K562 (cell line): ENCODE measurements at regions of chr2 and their contacts with region 1.

Region 1: GRCh38 chr2:56183643-56184499 is at the start of gene CCDC85A:
- DNase-seq: peak; percentile 85 to 90 (median 88)
- ATAC-seq: peak; percentile 99
- H3K4me3 ChIP-seq: peak within 1 kb of the TSS; percentile 41
- H3K27ac ChIP-seq: no peak within 1 kb of the TSS
- H3K4me1 ChIP-seq: peaks cover 0 to 14% of the 10 kb centered on the region in 2 experiments; a peak in 3 of 5 replicates
- H3K27me3 ChIP-seq: peaks cover 11 to 20% of the 10 kb centered on the region in 2 experiments; a peak in 3 of 5 replicates
- CTCF ChIP-seq: peak; percentile 79 to 83 (median 79)
- EP300 ChIP-seq: no peak
- POLR2A ChIP-seq: no peak
- RAD21 ChIP-seq: peak; percentile 67 to 79
- polyA plus RNA-seq, gene CCDC85A: not detected

Region 2: DNA sequence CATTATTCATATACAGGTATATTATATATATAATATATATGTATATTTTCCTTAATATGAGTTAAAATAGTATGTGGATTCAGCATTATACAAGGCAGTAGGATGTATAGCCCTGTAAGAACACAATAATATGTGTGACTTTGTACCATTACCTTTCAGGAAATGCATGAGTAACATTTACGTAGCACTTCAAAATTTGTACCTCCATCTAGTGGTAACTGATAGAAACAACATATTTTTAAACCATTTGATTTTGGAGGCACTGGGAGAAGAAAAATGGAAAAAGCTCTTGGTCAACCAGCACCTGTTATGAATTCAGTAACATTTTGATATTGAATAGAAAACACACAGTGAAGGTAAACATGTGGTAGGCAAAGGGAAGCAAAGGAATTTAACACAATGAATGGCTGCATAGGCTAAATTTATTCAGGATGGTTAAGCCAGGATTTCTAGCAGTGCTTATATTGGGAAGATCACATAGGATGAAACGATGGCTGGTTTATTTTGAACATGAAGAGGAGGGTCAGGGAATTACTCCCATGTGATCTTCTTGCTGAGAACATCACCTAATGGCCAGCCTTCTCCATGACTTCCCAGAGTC is 565.4 kb after region 1 on chr2:
- CTCF ChIA-PET with region 1: no interaction called
- POLR2A ChIA-PET with region 1: no interaction called
- in situ Hi-C with region 1: loop called (anchors 25 kb)
- intact Hi-C with region 1: loop called (anchors 1 kb)
- DNase-seq: peak in 1 of 4 experiments; percentile 0
- ATAC-seq: no peak
- H3K4me3 ChIP-seq: no peak overlapping the region
- H3K27ac ChIP-seq: no peak overlapping the region
- H3K4me1 ChIP-seq: no peaks in the 10 kb centered on the region
- H3K27me3 ChIP-seq: no peaks in the 10 kb centered on the region
- CTCF ChIP-seq: peak in 1 of 3 experiments; percentile 38; a peak in 2 of 6 replicates
- EP300 ChIP-seq: no peak
- POLR2A ChIP-seq: no peak
- RAD21 ChIP-seq: peak; percentile 20 to 23; a peak in 2 of 4 replicates

Region 3: GRCh38 chr2:57497489-57498096 is 1313.7 kb after region 1 on chr2:
- CTCF ChIA-PET with region 1: no interaction called
- POLR2A ChIA-PET with region 1: no interaction called
- in situ Hi-C with region 1: no loop called
- intact Hi-C with region 1: loop called (anchors 5 kb)
- DNase-seq: peak; percentile 23 to 49 (median 27)
- ATAC-seq: peak; percentile 72
- H3K4me3 ChIP-seq: no peak overlapping the region
- H3K27ac ChIP-seq: no peak overlapping the region
- H3K4me1 ChIP-seq: no peaks in the 10 kb centered on the region
- H3K27me3 ChIP-seq: no peaks in the 10 kb centered on the region
- CTCF ChIP-seq: peak; percentile 47 to 66 (median 66); a peak in 5 of 6 replicates
- EP300 ChIP-seq: no peak
- POLR2A ChIP-seq: no peak
- RAD21 ChIP-seq: peak; percentile 33 to 69; a peak in 3 of 4 replicates

Region 4: GRCh38 chr2:57516698-57517340 is 1332.9 kb after region 1 on chr2:
- CTCF ChIA-PET with region 1: no interaction called
- POLR2A ChIA-PET with region 1: no interaction called
- in situ Hi-C with region 1: no loop called
- intact Hi-C with region 1: loop called (anchors 5 kb)
- DNase-seq: peak; percentile 24 to 37 (median 33)
- ATAC-seq: peak; percentile 74
- H3K4me3 ChIP-seq: no peak overlapping the region
- H3K27ac ChIP-seq: no peak overlapping the region
- H3K4me1 ChIP-seq: no peaks in the 10 kb centered on the region
- H3K27me3 ChIP-seq: no peaks in the 10 kb centered on the region
- CTCF ChIP-seq: peak in 2 of 3 experiments; percentile 40 to 69; a peak in 3 of 6 replicates
- EP300 ChIP-seq: no peak
- POLR2A ChIP-seq: no peak
- RAD21 ChIP-seq: peak; percentile 58 to 77